ENCODE measurements at regions of chr15 and their contacts with region 1.

Region 1: DNA sequence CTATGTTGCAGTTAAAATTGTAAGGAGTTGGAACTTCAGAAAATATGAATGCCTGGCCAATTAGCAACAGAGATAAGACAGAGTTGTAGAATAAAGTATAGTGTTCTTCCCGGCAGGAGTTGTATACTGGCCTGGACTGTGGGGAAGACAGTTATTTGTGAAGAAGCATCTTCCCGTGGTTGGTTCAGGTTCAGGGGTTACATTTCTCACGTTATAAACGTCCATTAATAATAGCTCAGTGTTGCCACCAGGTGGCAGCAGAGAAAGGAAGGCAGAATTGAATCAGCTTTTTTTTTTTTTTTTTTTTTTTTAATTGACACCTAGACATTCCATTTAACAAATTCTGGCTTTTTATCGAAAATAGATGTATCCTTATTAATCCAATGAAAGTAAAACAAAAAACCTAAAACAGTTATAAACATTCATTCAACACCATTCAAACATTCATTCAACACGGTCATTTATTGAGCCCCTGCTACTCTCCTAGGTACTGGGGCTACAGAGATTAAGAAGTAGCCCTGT is 66.4 kb upstream of the NR2E3 start:
- DNase-seq: no peak
- H3K4me3 ChIP-seq: no peak overlapping the region
- H3K27ac ChIP-seq: no peak overlapping the region
- H3K27me3 ChIP-seq: no peaks in the 10 kb centered on the region
- CTCF ChIP-seq: peak; percentile 72

Region 2: GRCh38 chr15:71526060-71526820 is 217.7 kb before region 1 on chr15:
- CTCF ChIA-PET with region 1: interaction called, 10 read pairs
- POLR2A ChIA-PET with region 1: no interaction called
- DNase-seq: peak; percentile 7
- H3K4me3 ChIP-seq: no peak overlapping the region
- H3K27ac ChIP-seq: no peak overlapping the region
- H3K27me3 ChIP-seq: no peaks in the 10 kb centered on the region
- CTCF ChIP-seq: no peak

Region 3: GRCh38 chr15:71707230-71708050 is 36.5 kb before region 1 on chr15:
- CTCF ChIA-PET with region 1: interaction called, 10 read pairs
- POLR2A ChIA-PET with region 1: no interaction called
- DNase-seq: no peak
- H3K4me3 ChIP-seq: no peak overlapping the region
- H3K27ac ChIP-seq: no peak overlapping the region
- H3K27me3 ChIP-seq: no peaks in the 10 kb centered on the region
- CTCF ChIP-seq: no peak

Region 4: GRCh38 chr15:71723344-71723743 is 20.6 kb before region 1 on chr15:
- CTCF ChIA-PET with region 1: interaction called, 16 read pairs
- POLR2A ChIA-PET with region 1: no interaction called
- DNase-seq: no peak
- H3K4me3 ChIP-seq: no peak overlapping the region
- H3K27ac ChIP-seq: no peak overlapping the region
- H3K27me3 ChIP-seq: no peaks in the 10 kb centered on the region
- CTCF ChIP-seq: no peak

Region 5: DNA sequence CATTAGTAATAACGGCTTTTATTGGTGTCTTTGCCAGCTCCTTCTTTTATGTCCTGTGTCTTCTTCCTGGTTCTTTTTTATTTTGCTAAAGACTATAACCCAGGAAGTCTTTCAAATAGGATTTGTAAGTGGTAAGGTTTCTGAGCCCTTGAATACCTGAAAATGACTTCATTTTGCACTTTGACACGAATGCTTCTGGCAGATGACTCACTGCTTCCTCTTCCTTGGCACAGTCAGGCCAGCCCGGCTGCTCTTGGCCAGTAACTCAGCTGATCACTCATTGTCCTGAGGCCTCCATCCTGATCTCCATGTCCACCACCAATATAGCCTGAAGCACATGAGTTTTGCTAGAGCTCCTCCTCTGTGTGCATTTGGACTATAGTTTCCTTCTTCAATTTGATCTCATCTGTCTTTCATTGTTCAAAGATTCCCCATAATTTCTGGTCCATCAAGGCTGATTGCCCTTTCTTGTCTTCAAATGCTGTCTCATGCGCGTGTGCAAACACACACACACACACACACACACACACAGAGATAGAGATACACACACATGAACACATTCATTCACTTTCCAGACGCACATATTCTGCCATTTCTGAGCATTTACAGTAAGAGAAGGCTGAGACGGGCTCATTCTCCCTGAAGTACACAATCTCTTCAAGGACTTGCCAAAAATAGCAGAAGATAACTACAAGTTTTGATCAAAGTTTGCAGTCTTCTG is 17.9 kb after region 1 on chr15:
- CTCF ChIA-PET with region 1: interaction called, 10 read pairs
- POLR2A ChIA-PET with region 1: no interaction called
- DNase-seq: peak; percentile 45
- H3K4me3 ChIP-seq: no peak overlapping the region
- H3K27ac ChIP-seq: no peak overlapping the region
- H3K27me3 ChIP-seq: no peaks in the 10 kb centered on the region
- CTCF ChIP-seq: no peak

Region 6: DNA sequence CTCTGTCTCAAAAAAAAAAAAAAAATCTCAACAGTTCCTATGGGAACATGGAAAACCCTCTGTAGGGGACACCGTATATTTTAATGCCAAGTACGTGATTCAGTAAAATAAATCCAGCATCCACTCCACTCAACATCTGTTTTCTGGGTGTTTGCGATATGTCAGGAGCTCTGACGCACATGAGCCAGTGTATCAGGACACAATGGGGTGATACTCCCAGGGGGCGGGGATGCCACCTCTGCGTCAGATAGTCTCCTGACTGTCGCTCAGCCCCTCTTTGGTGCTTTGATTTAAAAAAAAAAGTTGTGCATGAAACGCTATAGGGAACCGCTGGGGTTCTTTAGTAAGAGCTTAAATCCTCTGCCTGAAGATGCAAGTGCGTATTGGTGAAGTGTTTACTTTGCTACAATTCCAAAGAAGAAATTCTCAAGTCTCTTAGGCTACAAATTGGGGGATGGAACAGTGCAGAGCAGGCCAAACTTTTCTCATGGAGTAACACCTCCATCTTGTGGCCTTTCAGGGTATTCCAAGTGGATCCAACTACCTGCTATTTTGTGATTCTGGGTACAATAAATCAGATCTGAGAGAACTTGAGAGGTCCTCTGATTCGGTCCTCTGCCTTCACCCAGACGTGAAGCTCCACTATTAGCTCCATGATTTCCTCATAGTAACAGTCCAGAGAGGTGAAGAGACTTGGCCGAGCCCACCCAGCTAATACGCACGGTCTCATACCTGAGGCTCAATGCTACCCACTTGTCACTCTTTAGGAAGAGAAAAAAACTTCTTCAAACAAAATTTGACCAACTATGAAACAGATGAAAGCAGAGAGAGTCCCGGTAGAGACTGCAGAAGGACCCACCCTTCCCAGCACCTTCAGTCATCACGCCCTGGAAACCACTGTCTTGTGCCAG is 57.2 kb after region 1 on chr15:
- CTCF ChIA-PET with region 1: interaction called, 75 read pairs
- POLR2A ChIA-PET with region 1: interaction called, 3 read pairs
- DNase-seq: peak; percentile 67
- H3K4me3 ChIP-seq: no peak overlapping the region; the same call in 1 of the 2 replicates
- H3K27ac ChIP-seq: peak overlapping the region; percentile 59
- H3K27me3 ChIP-seq: no peaks in the 10 kb centered on the region
- CTCF ChIP-seq: peak; percentile 88

Region 7: DNA sequence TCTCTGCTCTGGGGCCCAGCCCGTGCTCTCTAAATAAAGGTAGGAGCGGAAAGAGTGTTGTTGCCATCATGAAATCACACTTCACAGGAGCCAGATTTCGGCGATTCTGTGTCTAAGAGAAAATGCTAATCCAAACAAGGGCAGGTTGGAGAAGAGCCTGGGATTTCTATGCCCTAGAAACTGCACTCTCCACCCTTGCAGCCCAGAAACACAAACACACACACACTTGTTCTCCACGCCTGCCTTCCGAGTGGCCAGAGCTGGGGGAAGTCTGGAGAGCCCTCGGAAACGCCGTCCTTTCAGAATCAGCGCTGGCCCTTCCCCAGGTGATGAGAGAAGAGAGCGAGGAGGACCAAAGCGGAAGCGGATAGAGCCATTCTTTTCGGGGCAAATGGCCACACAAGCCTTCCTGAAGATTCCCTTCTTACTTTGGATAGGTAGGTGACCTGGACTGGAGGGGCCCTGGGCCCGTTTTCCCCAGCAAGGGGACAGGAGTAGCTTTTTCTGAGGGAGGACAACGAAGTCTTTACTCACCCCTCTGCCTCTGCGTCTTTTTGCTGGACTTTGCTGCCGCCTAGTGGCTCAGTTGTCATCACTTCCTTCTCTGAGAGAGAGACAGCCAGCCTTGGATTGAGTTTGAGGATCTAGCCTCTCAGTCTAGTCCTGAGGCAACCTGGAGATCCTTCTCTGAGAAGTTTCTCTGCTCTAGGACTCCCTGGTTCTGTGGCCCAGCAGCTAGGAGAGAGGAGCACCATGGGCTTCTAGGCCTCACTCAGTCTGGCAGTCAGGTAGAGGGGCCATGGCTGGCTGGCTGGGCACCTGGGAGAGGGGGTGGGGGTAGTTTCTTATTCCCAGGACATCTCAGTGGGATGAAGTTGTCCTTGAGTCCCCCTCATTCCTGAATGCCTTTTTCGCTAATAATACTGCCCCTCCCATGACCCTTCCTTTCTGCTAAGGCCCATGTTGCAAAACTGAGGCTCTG is 412.0 kb after region 1 on chr15:
- CTCF ChIA-PET with region 1: interaction called, 39 read pairs
- POLR2A ChIA-PET with region 1: no interaction called
- DNase-seq: peak; percentile 48
- H3K4me3 ChIP-seq: peak overlapping the region; percentile 60
- H3K27ac ChIP-seq: peak overlapping the region; percentile 21
- H3K27me3 ChIP-seq: peaks cover under 1% of the 10 kb centered on the region
- CTCF ChIP-seq: peak; percentile 92

Measured in AG04450 (cell line).